AG04449 (cell line): ENCODE measurements at regions of chr17 and their contacts with region 1.

Region 1: DNA sequence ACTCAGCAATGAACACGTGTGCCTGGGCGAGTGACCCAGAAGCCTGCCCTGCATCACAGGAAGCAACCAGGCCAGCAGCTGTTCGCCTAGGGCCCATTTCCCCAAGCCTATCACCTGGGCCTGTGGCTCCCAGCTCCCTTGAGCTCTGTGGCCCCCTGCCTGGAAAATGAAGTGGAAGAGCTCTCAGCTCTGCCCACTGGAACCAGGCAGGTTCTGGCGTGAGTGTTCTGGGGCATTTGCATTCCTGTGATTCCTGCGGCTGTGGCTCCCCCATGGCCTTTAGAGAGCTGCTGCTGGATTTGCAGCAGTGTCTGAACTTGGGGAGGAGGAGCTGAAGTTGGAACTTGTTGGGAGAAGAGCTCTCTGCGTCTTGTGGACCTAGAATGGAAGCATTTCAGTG is 22.8 kb downstream of the PGS1 start:
- DNase-seq: no peak
- H3K4me3 ChIP-seq: no peak overlapping the region
- CTCF ChIP-seq: no peak

Region 2: GRCh38 chr17:78197147-78197832 is 204.0 kb before region 1 on chr17:
- CTCF ChIA-PET with region 1: no interaction called
- POLR2A ChIA-PET with region 1: no interaction called
- DNase-seq: no peak
- H3K4me3 ChIP-seq: no peak overlapping the region
- CTCF ChIP-seq: no peak

Region 3: GRCh38 chr17:78412403-78412802 is 11.2 kb after region 1 on chr17:
- CTCF ChIA-PET with region 1: interaction called, 87 read pairs
- POLR2A ChIA-PET with region 1: no interaction called
- DNase-seq: no peak
- H3K4me3 ChIP-seq: no peak overlapping the region
- CTCF ChIP-seq: peak; percentile 56